Ascending aorta (tissue), 2 donors: ENCODE measurements at regions of chrX and their contacts with region 1.

Region 1: DNA sequence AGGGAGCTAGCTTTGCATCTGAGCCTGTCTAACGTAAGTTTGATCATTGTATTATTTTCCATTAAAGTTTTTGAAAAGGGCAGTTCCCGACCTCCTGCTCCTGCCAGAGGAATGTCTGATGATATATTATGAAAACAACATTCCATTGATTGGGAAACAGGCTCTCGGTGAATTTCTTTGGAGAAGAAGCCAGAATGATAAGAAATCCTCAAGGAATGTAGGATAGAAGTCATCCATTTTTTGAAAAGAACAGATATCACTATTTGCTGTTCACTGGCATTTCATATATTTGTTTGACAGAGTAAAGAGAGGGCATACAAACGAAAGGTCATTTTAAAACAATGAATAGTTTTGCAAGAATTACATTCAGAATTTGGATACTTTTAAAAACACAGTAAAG is 781.0 kb upstream of the HTR2C start:
- DNase-seq: no peak
- H3K4me3 ChIP-seq: no peak overlapping the region
- H3K27ac ChIP-seq: no peak overlapping the region
- H3K4me1 ChIP-seq: no peaks in the 10 kb centered on the region
- H3K27me3 ChIP-seq: no peaks in the 10 kb centered on the region
- CTCF ChIP-seq: no peak

Region 2: DNA sequence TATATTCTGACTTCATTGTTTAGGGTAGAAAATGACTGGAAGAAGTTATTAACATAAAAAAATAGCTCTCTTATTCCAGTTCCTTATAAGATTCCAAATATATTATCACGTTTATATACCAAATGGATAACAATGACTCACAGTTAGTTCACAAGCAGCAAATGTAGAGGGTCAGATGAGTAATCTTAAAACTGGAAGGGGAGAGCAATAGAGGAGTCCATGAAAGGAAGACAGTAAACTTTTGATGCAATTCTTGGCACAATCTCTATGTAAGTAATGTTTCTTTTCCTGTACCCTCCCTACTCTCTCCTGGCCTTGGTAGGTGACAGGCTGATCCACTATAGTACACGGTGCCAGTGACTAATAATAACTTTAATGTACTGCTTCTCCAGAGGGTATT is 1461.2 kb before region 1 on chrX:
- intact Hi-C with region 1: loop called (anchors 10 kb)
- DNase-seq: no peak
- H3K4me3 ChIP-seq: no peak overlapping the region
- H3K27ac ChIP-seq: no peak overlapping the region
- H3K4me1 ChIP-seq: no peaks in the 10 kb centered on the region
- H3K27me3 ChIP-seq: no peaks in the 10 kb centered on the region
- CTCF ChIP-seq: no peak

Region 3: GRCh38 chrX:114028907-114029662 is 226.2 kb after region 1 on chrX:
- intact Hi-C with region 1: no loop called
- DNase-seq: no peak
- H3K4me3 ChIP-seq: no peak overlapping the region
- H3K27ac ChIP-seq: no peak overlapping the region
- H3K4me1 ChIP-seq: no peaks in the 10 kb centered on the region
- H3K27me3 ChIP-seq: no peaks in the 10 kb centered on the region
- CTCF ChIP-seq: no peak